ENCODE measurements at regions of chr6 and their contacts with region 1.

Region 1: DNA sequence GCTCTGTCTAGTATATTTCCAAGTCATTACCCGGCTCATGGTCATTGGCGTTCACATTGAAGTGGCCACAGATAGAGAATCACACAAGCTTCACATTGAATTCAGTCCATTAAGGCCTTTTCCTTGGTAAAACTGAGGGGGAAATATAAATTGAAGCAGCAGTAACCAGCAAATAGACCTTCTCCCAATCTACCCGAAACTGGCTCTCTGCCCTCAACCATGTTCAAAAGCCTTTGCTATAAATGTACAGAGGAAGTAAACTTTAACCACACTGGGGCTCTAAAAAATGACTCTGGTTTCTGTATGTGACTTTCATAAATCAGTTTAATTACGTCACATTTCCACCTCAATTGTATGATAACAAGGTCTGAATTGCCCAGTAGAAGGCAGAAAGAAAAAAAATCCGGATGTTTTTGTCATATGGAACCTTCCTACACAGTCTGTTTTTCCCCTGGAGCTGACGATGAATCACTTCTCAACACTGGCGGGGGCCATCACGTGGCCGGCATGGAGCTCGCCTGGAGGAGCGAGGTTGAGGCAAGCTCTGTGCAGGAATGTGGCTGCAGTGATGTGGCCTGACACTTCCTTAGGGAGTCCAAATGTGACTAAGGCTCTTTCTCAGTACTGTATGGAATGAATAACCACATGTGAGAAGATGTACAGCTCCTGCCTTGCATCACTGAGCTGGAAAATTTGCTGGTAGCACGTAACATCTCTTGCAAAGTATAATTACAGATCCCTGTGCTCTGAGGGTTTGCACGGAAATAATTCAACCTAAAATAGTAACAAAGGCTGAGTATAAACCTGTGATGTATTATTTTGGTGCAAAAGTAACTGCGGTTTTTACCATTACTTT is 58.6 kb upstream of the SNX9 start:
- DNase-seq: peak; percentile 91 to 99
- H3K4me3 ChIP-seq: peak overlapping the region; percentile 6; the same call in 1 of the 2 replicates
- H3K27ac ChIP-seq: peak overlapping the region; percentile 99
- H3K4me1 ChIP-seq: peaks cover 59% of the 10 kb centered on the region
- H3K27me3 ChIP-seq: no peaks in the 10 kb centered on the region
- CTCF ChIP-seq: no peak

Region 2: GRCh38 chr6:157323255-157323965 is 441.0 kb before region 1 on chr6 and contains the start of gene TMEM242:
- CTCF ChIA-PET with region 1: interaction called, 16 read pairs
- POLR2A ChIA-PET with region 1: no interaction called
- intact Hi-C with region 1: loop called (anchors 10 kb)
- DNase-seq: peak; percentile 81 to 90
- H3K4me3 ChIP-seq: peak within 1 kb of the TSS; percentile 97
- H3K27ac ChIP-seq: peak within 1 kb of the TSS; percentile 64
- H3K4me1 ChIP-seq: peaks cover 23% of the 10 kb centered on the region
- H3K27me3 ChIP-seq: no peaks in the 10 kb centered on the region
- CTCF ChIP-seq: peak; percentile 51; the same call in 1 of the 2 replicates
- total RNA-seq, gene TMEM242: 8.1 and 8.7 TPM in 2 replicates

Region 3: DNA sequence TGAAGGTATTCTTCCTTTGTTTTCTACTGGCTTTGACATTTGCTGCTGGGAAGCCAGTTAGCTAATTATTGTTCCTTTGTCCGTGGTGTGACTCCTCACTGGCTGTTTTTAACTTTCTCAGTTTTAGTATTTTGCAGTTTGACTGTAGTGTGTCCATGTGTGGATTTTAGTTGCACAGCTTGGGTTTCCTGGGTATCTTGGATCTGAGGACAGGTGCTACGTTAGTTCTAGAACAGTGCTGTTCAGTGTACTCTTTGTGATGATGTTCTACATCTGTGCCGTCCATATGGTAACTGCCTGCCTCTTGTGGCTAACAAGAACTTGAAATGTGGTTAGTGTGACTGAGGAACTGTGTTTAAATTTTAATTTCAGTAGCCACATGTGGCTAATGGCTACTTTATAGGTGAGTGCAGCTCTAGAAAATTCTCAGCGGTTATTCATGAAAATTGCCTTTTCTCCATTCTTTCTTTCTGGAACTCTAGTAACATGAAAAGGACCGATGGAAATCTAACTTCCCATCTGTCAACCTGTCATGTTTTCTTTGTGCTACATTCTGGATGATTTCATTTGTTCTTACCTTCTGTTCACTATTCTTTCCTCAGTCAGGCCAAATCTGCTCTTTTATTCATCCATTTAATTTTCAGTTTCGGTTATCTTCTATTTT is 66.1 kb after region 1 on chr6:
- CTCF ChIA-PET with region 1: interaction called, 10 read pairs
- POLR2A ChIA-PET with region 1: interaction called, 12 read pairs
- intact Hi-C with region 1: loop called (anchors 2 kb)
- DNase-seq: no peak
- H3K4me3 ChIP-seq: no peak overlapping the region
- H3K27ac ChIP-seq: 0 out of 2 replicates have a peak overlapping the region, but pooled peaks have one; percentile 88
- H3K4me1 ChIP-seq: peaks cover 52% of the 10 kb centered on the region
- H3K27me3 ChIP-seq: no peaks in the 10 kb centered on the region
- CTCF ChIP-seq: no peak

Region 4: DNA sequence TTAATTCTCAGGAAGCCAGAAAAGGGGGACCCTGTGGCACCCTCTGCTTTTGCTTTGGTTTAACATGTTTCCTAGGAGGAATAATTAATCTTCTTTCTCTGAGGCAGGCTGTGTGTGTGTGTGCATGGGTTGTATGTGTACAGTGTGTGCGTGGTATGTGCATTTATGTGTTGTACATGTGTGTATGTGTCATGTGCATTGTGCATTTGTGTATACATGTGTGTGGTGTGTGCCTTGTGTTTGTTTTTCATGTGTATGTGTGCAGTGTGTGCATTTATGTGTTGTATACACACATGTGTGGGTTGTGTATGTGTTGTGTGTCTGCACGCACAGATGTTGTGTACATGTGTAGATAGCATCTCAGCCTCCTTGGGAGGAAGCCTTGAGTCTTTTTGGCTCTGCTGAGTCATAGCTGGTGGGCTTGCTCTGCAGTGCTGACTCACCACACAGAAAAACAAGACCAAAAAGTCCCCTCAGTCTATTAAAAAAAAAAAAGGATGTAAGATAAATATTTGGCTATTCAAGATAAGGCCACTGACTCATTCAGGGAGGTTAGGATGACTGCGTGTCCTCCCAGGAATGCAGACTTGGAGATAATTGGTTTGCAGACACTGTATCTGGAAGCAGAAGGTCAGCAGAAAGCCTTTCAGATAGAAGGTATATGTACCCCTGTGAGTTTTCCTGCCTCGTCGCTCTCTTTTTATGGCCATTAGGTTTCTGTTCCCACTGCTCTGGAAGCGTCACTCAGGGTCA is 275.8 kb after region 1 on chr6:
- CTCF ChIA-PET with region 1: no interaction called
- POLR2A ChIA-PET with region 1: no interaction called
- intact Hi-C with region 1: loop called (anchors 1 kb)
- DNase-seq: peak; percentile 60 to 97
- H3K4me3 ChIP-seq: peak overlapping the region; percentile 43; the same call in 1 of the 2 replicates
- H3K27ac ChIP-seq: peak overlapping the region; percentile 90
- H3K4me1 ChIP-seq: peaks cover 59% of the 10 kb centered on the region
- H3K27me3 ChIP-seq: no peaks in the 10 kb centered on the region
- CTCF ChIP-seq: no peak

Region 5: GRCh38 chr6:158644231-158645063 is 880.0 kb after region 1 on chr6 and contains the start of gene DYNLT1:
- CTCF ChIA-PET with region 1: no interaction called
- POLR2A ChIA-PET with region 1: no interaction called
- intact Hi-C with region 1: loop called (anchors 10 kb)
- DNase-seq: peak; percentile 93
- H3K4me3 ChIP-seq: peak within 1 kb of the TSS; percentile 68
- H3K27ac ChIP-seq: peak within 1 kb of the TSS; percentile 85
- H3K4me1 ChIP-seq: peaks cover 64% of the 10 kb centered on the region
- H3K27me3 ChIP-seq: no peaks in the 10 kb centered on the region
- CTCF ChIP-seq: no peak
- total RNA-seq, gene DYNLT1: 99.6 and 105 TPM in 2 replicates

Measured in PC-9 (cell line).